Thyroid gland (tissue), 4 donors: ENCODE measurements at regions of chr7 and their contacts with region 1.

Region 1: GRCh38 chr7:137656227-137656849 is 190.4 kb downstream of the DGKI start:
- DNase-seq: peak; percentile 87 to 90
- H3K4me3 ChIP-seq: no peak overlapping the region
- H3K27ac ChIP-seq: peak overlapping the region in 2 of 3 donors; percentile 25 to 45
- H3K4me1 ChIP-seq: peaks cover 16 to 23% of the 10 kb centered on the region in 2 donors
- H3K27me3 ChIP-seq: no peaks in the 10 kb centered on the region
- CTCF ChIP-seq: peak; percentile 72 to 89 (median 80)
- POLR2A ChIP-seq: no peak

Region 2: GRCh38 chr7:137443616-137444015 is 212.7 kb before region 1 on chr7:
- intact Hi-C with region 1: no loop called
- DNase-seq: no peak
- H3K4me3 ChIP-seq: no peak overlapping the region
- H3K27ac ChIP-seq: no peak overlapping the region
- H3K4me1 ChIP-seq: peaks cover 7 to 9% of the 10 kb centered on the region in 2 donors
- H3K27me3 ChIP-seq: no peaks in the 10 kb centered on the region
- CTCF ChIP-seq: no peak
- POLR2A ChIP-seq: no peak

Region 3: GRCh38 chr7:137886746-137887145 is 230.4 kb after region 1 on chr7:
- intact Hi-C with region 1: loop called (anchors 5 kb)
- DNase-seq: no peak
- H3K4me3 ChIP-seq: no peak overlapping the region
- H3K27ac ChIP-seq: peak overlapping the region in 2 of 3 donors; percentile 62 to 64
- H3K4me1 ChIP-seq: peaks cover 19 to 30% of the 10 kb centered on the region in 2 donors
- H3K27me3 ChIP-seq: no peaks in the 10 kb centered on the region
- CTCF ChIP-seq: no peak
- POLR2A ChIP-seq: no peak

Region 4: GRCh38 chr7:137898839-137899721 is 242.7 kb after region 1 on chr7:
- intact Hi-C with region 1: loop called (anchors 5 kb)
- DNase-seq: peak; percentile 80 to 85
- H3K4me3 ChIP-seq: no peak overlapping the region
- H3K27ac ChIP-seq: peak overlapping the region in 2 of 3 donors; percentile 28 to 71
- H3K4me1 ChIP-seq: peaks cover 7 to 17% of the 10 kb centered on the region in 2 donors
- H3K27me3 ChIP-seq: no peaks in the 10 kb centered on the region
- CTCF ChIP-seq: peak; percentile 72 to 95 (median 91)
- POLR2A ChIP-seq: no peak

Region 5: DNA sequence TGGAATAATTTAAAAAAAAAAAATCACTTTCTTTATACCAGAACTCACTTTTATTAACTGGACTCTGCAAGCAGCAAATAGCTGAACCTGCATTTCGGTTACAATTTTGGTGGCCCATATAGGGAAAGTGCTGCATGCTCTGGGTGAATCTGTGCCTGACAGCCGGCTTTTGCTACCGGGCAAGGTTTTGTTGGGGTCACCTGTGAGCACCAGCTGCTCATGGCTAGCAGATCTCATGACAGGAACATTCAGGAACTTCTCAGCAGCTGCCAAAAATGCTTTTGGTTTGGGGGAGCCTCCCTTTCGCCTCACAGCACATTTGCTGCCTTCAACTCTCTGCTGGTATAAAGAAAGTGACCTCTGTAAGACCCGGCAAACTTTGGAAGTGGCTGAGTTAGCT is 358.8 kb after region 1 on chr7:
- intact Hi-C with region 1: loop called (anchors 10 kb)
- DNase-seq: no peak
- H3K4me3 ChIP-seq: no peak overlapping the region
- H3K27ac ChIP-seq: no peak overlapping the region
- H3K4me1 ChIP-seq: peaks cover 6 to 11% of the 10 kb centered on the region in 2 donors
- H3K27me3 ChIP-seq: no peaks in the 10 kb centered on the region
- CTCF ChIP-seq: no peak
- POLR2A ChIP-seq: no peak